Aorta (tissue), 5 donors: ENCODE measurements at regions of chr15 and their contacts with region 1.

Region 1: GRCh38 chr15:69160141-69160993 is at the start of gene GLCE:
- DNase-seq: peak; percentile 97 to 98
- ATAC-seq: peak; percentile 99
- H3K4me3 ChIP-seq: peak within 1 kb of the TSS; percentile 91 to 96
- H3K27ac ChIP-seq: peak within 1 kb of the TSS in 1 of 2 donors; percentile 6
- H3K4me1 ChIP-seq: no peaks in the 10 kb centered on the region
- H3K27me3 ChIP-seq: no peaks in the 10 kb centered on the region
- total RNA-seq, gene GLCE: 8.1 to 15.0 TPM

Region 2: DNA sequence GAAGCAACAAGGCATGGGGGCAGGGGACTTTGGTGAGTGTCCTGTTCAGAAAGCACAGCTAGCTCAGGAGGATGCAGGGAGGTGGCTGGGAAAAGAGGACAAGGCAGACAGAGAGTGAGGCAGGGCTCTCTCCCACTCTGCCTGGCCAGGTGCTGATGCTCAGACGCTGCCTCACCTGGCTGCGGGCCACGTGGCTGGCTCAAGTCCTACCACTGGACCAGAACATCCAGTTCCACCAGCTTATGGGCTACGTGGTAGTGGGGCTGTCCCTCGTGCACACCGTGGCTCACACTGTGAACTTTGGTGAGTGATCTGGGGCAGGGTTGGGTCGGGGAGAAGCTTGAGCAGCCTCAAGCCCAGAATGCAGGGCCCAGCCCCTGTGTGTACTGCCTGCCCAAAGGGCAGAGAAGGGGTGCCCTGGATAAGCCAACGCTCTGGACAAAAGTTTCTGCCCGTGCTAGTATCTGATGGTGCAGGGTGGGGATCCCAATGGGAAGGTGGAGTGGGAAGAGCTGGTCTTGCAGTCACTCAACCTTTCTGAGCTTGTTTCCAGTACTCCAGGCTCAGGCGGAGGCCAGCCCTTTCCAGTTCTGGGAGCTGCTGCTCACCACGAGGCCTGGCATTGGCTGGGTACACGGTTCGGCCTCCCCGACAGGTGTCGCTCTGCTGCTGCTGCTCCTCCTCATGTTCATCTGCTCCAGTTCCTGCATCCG is 125.0 kb before region 1 on chr15:
- intact Hi-C with region 1: no loop called
- DNase-seq: no peak
- ATAC-seq: no peak
- H3K4me3 ChIP-seq: no peak overlapping the region
- H3K27ac ChIP-seq: no peak overlapping the region
- H3K4me1 ChIP-seq: no peaks in the 10 kb centered on the region
- H3K27me3 ChIP-seq: no peaks in the 10 kb centered on the region

Region 3: GRCh38 chr15:69045808-69046207 is 114.6 kb before region 1 on chr15:
- intact Hi-C with region 1: no loop called
- DNase-seq: no peak
- ATAC-seq: no peak
- H3K4me3 ChIP-seq: no peak overlapping the region
- H3K27ac ChIP-seq: no peak overlapping the region
- H3K4me1 ChIP-seq: no peaks in the 10 kb centered on the region
- H3K27me3 ChIP-seq: no peaks in the 10 kb centered on the region

Region 4: GRCh38 chr15:69074001-69074842 is 86.1 kb before region 1 on chr15:
- intact Hi-C with region 1: loop called in 1 of 2 experiments (anchors 10 kb)
- DNase-seq: peak; percentile 61 to 79
- ATAC-seq: peak; percentile 82
- H3K4me3 ChIP-seq: peak overlapping the region; percentile 31 to 45
- H3K27ac ChIP-seq: no peak overlapping the region
- H3K4me1 ChIP-seq: no peaks in the 10 kb centered on the region
- H3K27me3 ChIP-seq: no peaks in the 10 kb centered on the region

Region 5: DNA sequence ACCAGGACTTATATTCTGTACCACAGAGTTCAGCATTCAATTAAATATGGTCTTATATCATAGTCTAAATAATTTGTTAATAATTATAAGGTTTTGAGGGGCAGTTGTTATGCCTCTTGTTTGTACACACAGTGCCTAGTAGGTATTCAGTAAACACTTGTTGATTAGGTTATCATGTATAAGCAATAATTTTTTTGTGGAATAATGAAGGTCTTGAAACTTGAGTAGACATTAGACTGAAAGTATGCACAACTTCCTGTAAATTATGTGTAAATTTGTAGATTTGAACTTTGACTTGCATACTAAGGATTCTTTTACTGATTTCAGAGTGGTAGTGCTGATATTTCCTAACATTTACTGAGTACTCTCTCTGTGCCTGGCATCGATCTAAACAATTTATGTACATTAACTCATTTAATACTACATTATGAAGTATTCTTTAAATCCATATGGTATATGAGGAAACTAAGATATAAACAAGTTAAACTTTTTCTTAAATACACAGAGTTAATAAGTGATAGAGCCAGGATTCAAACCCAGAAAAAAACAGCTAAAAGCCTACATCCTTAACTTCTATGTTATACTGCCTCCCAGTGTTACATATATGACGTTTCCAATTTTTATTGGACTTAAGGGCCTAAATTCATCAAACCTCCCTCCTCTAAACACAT is 65.1 kb after region 1 on chr15:
- intact Hi-C with region 1: loop called in 1 of 2 experiments (anchors 5 kb)
- DNase-seq: no peak
- ATAC-seq: no peak
- H3K4me3 ChIP-seq: no peak overlapping the region
- H3K27ac ChIP-seq: no peak overlapping the region
- H3K4me1 ChIP-seq: no peaks in the 10 kb centered on the region
- H3K27me3 ChIP-seq: no peaks in the 10 kb centered on the region

Region 6: DNA sequence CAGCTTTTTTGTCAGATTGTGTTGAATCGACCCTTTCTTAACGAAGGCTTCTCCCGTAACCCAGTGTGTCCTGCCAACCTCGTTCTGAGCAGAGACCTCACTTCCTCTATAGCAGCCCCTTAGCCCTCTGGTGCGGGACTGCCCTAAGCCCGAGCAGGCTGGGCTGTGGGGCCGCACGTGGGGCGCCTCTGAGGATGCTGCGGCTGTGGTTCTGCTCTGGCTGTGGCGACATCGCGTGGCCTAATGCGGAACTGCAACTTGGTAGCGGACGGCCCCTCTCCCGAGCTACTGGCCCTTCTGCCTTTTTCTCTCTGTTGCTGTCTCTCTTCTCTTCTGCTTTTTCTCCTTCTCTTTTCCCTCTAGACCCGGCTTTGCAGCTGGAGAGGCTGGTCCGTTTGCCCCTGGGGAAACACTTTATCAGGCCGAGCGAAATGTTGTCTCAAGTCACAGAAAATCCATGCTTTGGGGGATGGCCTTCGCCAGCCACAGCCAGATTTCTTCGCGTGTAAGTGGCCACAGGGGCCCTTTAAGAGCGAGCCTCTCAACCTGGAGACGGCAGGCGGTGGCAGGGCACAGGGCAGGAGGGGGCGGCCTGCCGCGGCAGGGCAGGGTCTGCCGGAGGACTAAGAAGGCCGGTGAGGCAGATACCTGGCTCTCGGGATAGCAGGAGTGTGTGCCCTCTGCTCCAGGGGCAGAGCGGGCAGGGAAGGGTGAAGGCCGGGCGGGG is 234.4 kb after region 1 on chr15:
- intact Hi-C with region 1: loop called in 1 of 2 experiments (anchors 10 kb)
- DNase-seq: peak; percentile 86 to 95
- ATAC-seq: peak; percentile 93
- H3K4me3 ChIP-seq: no peak overlapping the region
- H3K27ac ChIP-seq: no peak overlapping the region
- H3K4me1 ChIP-seq: no peaks in the 10 kb centered on the region
- H3K27me3 ChIP-seq: no peaks in the 10 kb centered on the region